Activated naive CD4-positive, alpha-beta T cell treated with anti-CD3 and anti-CD28 coated beads, Interleukin-2, amount 10 ng/mL, durations not matched to agents 7 days and 5 days (primary cell): ENCODE measurements at regions of chr6 and their contacts with region 1.

Region 1: GRCh38 chr6:142155895-142156757 is 9.1 kb downstream of the VTA1 start:
- DNase-seq: no peak
- H3K4me3 Mint-ChIP-seq: no peak overlapping the region
- H3K27ac Mint-ChIP-seq: no peak overlapping the region
- H3K4me1 Mint-ChIP-seq: peaks cover 11% of the 10 kb centered on the region
- H3K27me3 Mint-ChIP-seq: no peaks in the 10 kb centered on the region

Region 2: DNA sequence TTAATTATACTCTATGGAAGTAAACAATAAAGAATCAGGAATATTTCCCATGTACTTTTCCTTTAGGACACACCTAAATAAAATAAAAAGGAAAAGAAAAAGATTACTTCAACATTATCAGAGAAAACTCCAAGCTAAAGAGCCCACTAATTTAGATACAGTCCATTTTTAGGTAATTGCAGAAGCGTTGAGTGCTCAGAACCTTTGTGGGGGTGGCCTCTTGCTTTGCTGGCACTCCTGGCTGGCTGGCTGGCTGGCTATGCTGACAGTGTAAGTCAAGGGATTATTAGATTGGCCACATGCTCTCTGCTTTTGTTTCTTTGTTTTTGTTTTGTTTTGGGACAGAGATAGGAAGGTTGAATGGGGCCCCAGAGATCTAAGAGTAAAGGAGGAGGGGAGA is 23.5 kb before region 1 on chr6 and contains the start of gene GJE1:
- CTCF ChIA-PET with region 1: no interaction called
- DNase-seq: no peak
- H3K4me3 Mint-ChIP-seq: no peak within 1 kb of the TSS
- H3K27ac Mint-ChIP-seq: no peak within 1 kb of the TSS
- H3K4me1 Mint-ChIP-seq: no peaks in the 10 kb centered on the region
- H3K27me3 Mint-ChIP-seq: peaks cover 4% of the 10 kb centered on the region

Region 3: GRCh38 chr6:142207265-142207877 is 51.2 kb after region 1 on chr6:
- CTCF ChIA-PET with region 1: interaction called, 13 read pairs
- DNase-seq: peak; percentile 53
- H3K4me3 Mint-ChIP-seq: no peak overlapping the region
- H3K27ac Mint-ChIP-seq: no peak overlapping the region
- H3K4me1 Mint-ChIP-seq: no peaks in the 10 kb centered on the region
- H3K27me3 Mint-ChIP-seq: no peaks in the 10 kb centered on the region

Region 4: DNA sequence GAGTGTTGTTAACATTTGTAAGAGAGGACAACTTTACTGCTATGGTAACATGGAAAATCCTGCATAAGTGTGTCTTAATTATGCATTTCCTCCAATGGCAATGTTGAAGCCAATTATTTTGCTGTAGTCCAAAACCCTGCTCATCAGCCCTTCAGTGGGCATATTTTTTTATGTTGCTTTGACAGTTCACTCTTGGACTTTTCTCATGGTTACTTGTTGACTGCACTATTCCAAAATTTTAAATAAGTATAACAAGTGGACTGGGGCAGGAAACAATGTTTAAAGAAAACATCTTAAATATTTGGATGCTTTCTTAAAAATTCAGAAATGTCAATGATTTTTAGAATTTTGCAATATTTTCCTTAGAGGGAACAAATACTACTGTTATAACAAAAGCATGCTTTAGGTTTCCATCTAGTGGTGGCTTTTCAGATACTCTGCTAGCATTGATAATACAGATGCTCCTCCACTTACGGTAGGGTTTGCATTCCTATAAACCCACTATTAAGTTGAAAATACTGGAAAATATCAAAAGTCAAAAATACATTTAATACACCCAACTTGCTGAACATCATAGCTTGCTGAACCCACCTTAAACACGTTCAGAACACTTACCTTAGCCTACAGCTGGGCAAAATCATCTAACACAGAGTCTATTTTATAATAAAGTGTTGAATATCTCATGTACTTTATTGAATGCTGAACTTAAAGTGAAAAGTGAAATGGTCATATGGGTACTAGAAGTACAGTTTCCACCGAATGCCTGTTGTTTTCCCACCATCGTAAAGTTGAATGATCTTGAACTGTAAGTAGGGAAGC is 232.1 kb after region 1 on chr6:
- CTCF ChIA-PET with region 1: interaction called, 18 read pairs
- DNase-seq: no peak
- H3K4me3 Mint-ChIP-seq: no peak overlapping the region
- H3K27ac Mint-ChIP-seq: no peak overlapping the region
- H3K4me1 Mint-ChIP-seq: peaks cover 5% of the 10 kb centered on the region
- H3K27me3 Mint-ChIP-seq: peaks cover 3% of the 10 kb centered on the region

Region 5: GRCh38 chr6:142474531-142475289 is 318.6 kb after region 1 on chr6:
- CTCF ChIA-PET with region 1: interaction called, 15 read pairs
- DNase-seq: no peak
- H3K4me3 Mint-ChIP-seq: no peak overlapping the region
- H3K27ac Mint-ChIP-seq: no peak overlapping the region
- H3K4me1 Mint-ChIP-seq: peaks cover 11% of the 10 kb centered on the region
- H3K27me3 Mint-ChIP-seq: no peaks in the 10 kb centered on the region